Caki2 (cell line): ENCODE measurements at regions of chr3 and their contacts with region 1.

Region 1: DNA sequence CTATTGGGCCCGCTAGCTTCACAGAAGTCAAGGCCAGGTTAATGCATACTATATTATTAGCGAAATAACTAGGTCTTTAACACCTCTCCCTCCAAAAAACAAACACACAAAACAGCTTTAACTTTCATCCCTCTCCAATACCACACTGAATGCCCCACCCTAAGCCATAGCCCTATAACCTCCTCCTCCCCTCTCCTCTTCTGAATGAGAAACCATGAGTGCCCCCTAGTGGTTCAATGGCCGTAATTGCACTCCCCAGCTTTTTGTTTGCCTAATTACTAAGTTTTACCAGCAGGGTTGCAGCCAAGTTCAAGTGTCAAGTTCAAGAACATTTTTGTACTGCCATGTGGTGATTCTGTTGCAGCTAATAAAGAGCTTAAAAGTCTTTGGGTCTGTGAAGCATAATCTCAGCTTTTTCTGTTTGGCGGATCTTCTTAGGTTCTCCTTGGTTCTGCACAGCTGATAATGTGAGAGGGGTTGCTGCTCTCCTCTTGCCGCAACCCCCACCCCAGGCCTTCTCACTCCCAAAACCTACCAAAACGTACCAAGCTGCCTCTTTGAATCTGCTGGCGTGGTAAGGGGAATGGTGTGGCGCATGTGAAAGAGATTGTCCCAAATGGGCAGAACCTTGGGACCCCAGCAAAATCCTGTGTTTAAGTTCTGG is 57.9 kb downstream of the RPL22L1 start:
- DNase-seq: peak; percentile 92

Region 2: DNA sequence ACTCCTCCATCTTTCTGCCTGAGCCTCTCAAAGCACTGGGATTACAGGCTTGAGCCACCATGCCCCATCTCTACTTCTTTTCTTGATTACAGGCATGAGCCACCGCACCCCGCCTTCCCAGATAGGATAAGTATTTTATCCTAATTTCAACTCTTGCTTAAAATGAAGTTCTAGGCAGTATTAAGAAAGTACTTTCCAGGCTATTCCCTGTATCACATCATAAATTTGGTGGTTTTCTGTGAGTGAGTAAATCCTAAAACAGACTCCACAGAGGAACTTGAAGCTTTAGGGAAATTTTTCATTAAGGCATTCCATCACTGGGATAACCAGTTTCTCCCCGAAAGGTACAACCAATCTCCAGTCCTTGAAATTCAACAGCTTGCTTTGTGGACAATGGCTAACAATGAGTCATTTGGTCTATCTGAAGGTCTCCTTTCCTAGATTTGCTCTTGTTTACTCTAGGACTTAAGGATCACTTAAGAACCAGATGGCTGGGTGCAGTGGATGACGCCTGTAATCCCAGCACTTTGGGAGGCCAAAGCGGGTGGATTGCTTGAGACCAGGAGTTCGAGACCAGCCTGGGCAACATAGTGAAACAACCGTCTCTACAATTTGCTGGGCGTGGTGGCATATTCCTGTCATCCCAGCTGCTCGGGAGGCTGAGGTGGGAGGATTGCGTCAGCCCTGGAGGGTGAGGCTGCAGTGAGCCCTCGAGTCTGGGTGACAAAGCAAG is 504.2 kb before region 1 on chr3:
- in situ Hi-C with region 1: loop called (anchors 25 kb)
- DNase-seq: no peak

Region 3: GRCh38 chr3:170429050-170429449 is 383.0 kb before region 1 on chr3:
- in situ Hi-C with region 1: loop called (anchors 5 kb)
- DNase-seq: peak; percentile 55